Caco-2 (cell line): ENCODE measurements at regions of chr20 and their contacts with region 1.

Region 1: DNA sequence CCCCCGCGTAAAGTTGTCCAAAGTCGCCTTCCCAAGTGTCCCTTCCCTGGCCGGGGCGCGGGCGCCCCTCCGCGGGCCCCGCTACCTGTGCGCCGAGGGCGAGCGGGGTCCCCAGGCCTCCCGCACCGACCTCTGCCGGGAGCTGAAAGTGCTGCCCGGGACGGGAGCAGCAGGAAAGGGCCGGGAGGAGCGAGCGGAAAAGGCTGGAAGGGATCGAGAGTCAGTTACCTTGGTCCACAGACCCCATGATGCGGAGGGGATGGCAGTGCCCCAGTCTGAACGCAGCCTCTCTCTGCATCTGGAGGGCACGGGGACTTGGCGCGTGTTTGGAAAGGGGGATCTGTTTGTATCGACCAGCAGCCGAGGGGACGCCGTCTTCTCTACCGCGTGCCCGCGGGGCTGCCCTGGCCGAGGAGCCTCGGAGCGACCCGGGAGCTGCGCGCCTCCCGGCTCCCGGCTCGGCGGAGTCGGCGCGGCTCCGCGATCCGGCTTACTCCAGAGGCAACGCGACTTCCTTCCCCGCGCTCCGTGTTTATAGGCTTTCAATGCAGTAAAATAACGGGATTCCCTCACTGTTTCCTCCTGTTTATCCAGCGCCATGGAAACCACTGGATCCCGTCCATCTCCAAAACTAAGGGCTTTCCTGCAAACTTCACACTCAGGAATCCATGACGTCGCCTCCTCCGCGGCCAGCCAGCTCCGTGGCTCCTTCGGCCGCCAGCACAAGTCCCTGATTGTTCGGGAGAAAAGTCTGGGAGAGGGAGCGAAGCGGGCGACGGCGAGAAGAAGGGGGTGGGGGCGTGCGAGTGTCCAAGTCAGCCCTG is 20.0 kb upstream of the NFATC2 start:
- DNase-seq: peak; percentile 78 to 83
- H3K4me3 ChIP-seq: peak overlapping the region; percentile 36
- H3K4me3 Mint-ChIP-seq: peak overlapping the region; percentile 88
- H3K27ac Mint-ChIP-seq: peak overlapping the region; percentile 71
- H3K4me1 ChIP-seq: peaks cover 28% of the 10 kb centered on the region
- H3K4me1 Mint-ChIP-seq: peaks cover 37% of the 10 kb centered on the region
- H3K27me3 ChIP-seq: peaks cover 8% of the 10 kb centered on the region
- H3K27me3 Mint-ChIP-seq: peaks cover 25% of the 10 kb centered on the region
- CTCF ChIP-seq: peak; percentile 24 to 63

Region 2: DNA sequence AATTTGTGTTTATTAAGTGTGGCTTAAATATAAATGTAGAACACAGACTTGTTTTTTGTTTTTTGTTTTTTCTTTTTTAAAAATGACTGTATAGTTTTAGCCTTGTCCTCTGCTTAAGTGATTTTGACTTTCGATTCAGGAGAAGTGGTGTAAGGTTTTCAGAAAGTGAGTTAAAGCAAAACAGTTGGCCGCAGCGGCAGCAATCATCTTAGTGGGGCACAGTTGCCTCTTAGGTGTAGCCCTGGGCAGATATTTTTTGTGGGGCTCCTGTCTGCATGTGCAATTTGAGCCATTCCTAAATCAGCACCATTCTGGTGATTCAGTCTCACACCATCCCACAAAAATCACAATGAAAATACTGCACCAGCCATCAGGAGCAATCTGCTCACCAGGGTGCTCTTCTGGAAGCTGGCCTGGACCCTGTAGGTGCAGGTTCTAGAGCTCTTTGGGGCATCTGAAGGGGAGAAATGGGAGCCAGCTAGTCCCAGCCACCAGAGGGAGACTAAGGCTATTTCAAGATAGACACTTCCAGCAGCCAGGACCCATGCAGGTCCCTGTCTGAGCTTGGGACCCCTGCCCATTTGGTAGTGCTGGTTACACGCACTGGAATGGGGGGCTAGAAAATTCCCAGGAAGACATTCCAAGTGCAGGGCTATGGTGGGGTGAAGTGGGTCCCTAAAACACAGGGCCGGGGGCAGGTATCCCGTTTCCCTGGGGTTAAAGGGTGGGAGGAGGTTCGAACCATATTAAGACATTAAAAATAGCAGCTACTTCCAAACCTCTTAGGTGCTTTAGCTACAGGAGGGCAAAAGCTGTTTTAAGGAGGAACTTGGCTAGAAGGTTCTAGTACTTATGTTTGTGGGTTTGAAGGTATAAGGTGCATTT is 176.7 kb before region 1 on chr20:
- CTCF ChIA-PET with region 1: interaction called, 28 read pairs
- POLR2A ChIA-PET with region 1: no interaction called
- intact Hi-C with region 1: loop called (anchors 1 kb)
- DNase-seq: peak in 1 of 2 experiments; percentile 68
- H3K4me3 ChIP-seq: no peak overlapping the region
- H3K4me3 Mint-ChIP-seq: no peak overlapping the region
- H3K27ac Mint-ChIP-seq: no peak overlapping the region
- H3K4me1 ChIP-seq: peaks cover 14% of the 10 kb centered on the region
- H3K4me1 Mint-ChIP-seq: peaks cover 20% of the 10 kb centered on the region
- H3K27me3 ChIP-seq: no peaks in the 10 kb centered on the region
- H3K27me3 Mint-ChIP-seq: no peaks in the 10 kb centered on the region
- CTCF ChIP-seq: peak; percentile 81 to 88